ENCODE measurements at regions of chr5 and their contacts with region 1.

Region 1: GRCh38 chr5:146130440-146131045 is 25.2 kb upstream of the PLAC8L1 start:
- DNase-seq: no peak
- ATAC-seq: no peak
- H3K4me3 Mint-ChIP-seq: no peak overlapping the region
- H3K27ac Mint-ChIP-seq: no peak overlapping the region
- H3K4me1 Mint-ChIP-seq: no peaks in the 10 kb centered on the region
- H3K27me3 Mint-ChIP-seq: no peaks in the 10 kb centered on the region

Region 2: GRCh38 chr5:145681686-145682085 is 448.9 kb before region 1 on chr5:
- CTCF ChIA-PET with region 1: interaction called, 3 read pairs
- POLR2A ChIA-PET with region 1: no interaction called
- intact Hi-C with region 1: loop called in 1 of 2 experiments (anchors 10 kb)
- DNase-seq: peak; percentile 60
- ATAC-seq: peak; percentile 94
- H3K4me3 Mint-ChIP-seq: no peak overlapping the region
- H3K27ac Mint-ChIP-seq: no peak overlapping the region
- H3K4me1 Mint-ChIP-seq: peaks cover 3% of the 10 kb centered on the region
- H3K27me3 Mint-ChIP-seq: no peaks in the 10 kb centered on the region

Region 3: GRCh38 chr5:146034125-146034524 is 96.4 kb before region 1 on chr5:
- CTCF ChIA-PET with region 1: no interaction called
- POLR2A ChIA-PET with region 1: no interaction called
- intact Hi-C with region 1: no loop called
- DNase-seq: no peak
- ATAC-seq: no peak
- H3K4me3 Mint-ChIP-seq: no peak overlapping the region
- H3K27ac Mint-ChIP-seq: no peak overlapping the region
- H3K4me1 Mint-ChIP-seq: no peaks in the 10 kb centered on the region
- H3K27me3 Mint-ChIP-seq: peaks cover 2% of the 10 kb centered on the region

Region 4: GRCh38 chr5:146103594-146103993 is 26.9 kb before region 1 on chr5:
- CTCF ChIA-PET with region 1: no interaction called
- POLR2A ChIA-PET with region 1: no interaction called
- intact Hi-C with region 1: no loop called
- DNase-seq: no peak
- ATAC-seq: no peak
- H3K4me3 Mint-ChIP-seq: no peak overlapping the region
- H3K27ac Mint-ChIP-seq: no peak overlapping the region
- H3K4me1 Mint-ChIP-seq: no peaks in the 10 kb centered on the region
- H3K27me3 Mint-ChIP-seq: no peaks in the 10 kb centered on the region

Measured in activated CD4-positive, alpha-beta T cell treated with anti-CD3 and anti-CD28 coated beads for 36 hours (primary cell).